Posterior cingulate gyrus (tissue), 11 donors: ENCODE measurements at regions of chr5 and their contacts with region 1.

Region 1: GRCh38 chr5:16456103-16456832 is 9.3 kb downstream of the ZNF622 start:
- DNase-seq: peak in 4 of 10 donors; percentile 16 to 85 (median 44)

Region 2: DNA sequence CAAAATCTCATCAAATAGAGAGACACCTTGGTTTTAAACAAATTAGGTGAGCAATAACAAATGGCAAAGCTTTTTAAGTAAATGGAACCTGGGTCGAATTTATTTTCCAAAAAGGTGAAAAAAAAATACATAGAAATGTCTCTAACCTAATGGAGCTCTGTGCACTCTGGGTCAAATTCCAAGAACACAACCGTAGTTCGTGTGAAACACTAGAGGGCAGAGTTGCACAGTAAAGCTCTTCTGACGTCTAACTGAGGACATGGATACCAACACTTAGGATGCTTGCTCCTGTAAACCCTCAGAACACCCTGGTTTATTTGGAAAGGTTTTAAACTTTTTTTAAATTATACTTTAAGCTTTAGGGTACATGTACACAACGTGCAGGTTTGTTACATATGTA is 295.6 kb before region 1 on chr5:
- intact Hi-C with region 1: loop called (anchors 5 kb)
- DNase-seq: peak in 2 of 10 donors; percentile 19 to 26